WTC11 (cell line): ENCODE measurements at regions of chr11 and their contacts with region 1.

Region 1: GRCh38 chr11:13343931-13344717 is 66.5 kb downstream of the BMAL1 start:
- DNase-seq: peak; percentile 75
- ATAC-seq: peak; percentile 57
- H3K4me3 Mint-ChIP-seq: no peak overlapping the region
- H3K27ac Mint-ChIP-seq: no peak overlapping the region
- H3K4me1 Mint-ChIP-seq: peaks cover 10% of the 10 kb centered on the region
- H3K27me3 Mint-ChIP-seq: no peaks in the 10 kb centered on the region
- CTCF ChIP-seq: peak; percentile 82

Region 2: DNA sequence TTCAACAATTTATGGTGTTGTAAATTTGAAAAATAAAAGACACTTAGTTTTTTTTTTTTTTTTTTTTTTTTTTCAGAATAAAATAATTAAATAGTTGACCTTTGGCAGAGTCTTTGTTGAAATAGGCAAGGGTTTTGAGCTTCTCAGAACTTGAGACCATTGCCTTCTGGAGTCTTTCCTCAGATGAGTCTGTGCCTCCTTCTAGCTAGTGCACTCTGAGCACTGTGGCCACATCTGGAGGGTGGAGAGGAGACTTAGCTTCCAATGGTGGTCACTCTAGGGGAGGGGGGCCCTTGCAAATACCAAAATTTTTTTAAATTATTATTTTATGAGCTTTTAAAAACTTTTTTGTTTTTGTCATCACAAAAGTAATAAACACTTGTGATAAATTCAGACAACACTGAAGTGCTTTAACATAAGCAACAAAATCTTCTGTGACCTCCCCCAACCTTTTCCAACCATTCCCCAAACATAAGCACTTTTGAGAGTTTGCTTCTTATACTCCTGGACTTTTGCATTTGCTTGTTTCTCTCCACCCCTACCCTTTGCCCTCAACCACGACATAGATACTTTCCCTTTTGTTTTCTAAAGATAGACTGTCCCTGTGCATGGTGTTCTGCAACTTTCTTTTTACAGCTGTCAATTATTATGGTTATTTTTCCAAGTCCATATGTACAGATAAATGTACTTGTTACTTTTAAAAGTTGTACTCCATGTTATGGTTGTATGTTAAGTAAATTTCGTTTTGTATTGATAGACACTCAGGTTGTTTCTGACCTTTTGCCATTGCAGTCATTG is 25.4 kb before region 1 on chr11:
- CTCF ChIA-PET with region 1: interaction called, 10 read pairs
- POLR2A ChIA-PET with region 1: no interaction called
- DNase-seq: no peak
- ATAC-seq: no peak
- H3K4me3 Mint-ChIP-seq: no peak overlapping the region
- H3K27ac Mint-ChIP-seq: no peak overlapping the region
- H3K4me1 Mint-ChIP-seq: peaks cover 20% of the 10 kb centered on the region
- H3K27me3 Mint-ChIP-seq: no peaks in the 10 kb centered on the region
- CTCF ChIP-seq: no peak